ENCODE measurements at regions of chr15 and their contacts with region 1.

Region 1: DNA sequence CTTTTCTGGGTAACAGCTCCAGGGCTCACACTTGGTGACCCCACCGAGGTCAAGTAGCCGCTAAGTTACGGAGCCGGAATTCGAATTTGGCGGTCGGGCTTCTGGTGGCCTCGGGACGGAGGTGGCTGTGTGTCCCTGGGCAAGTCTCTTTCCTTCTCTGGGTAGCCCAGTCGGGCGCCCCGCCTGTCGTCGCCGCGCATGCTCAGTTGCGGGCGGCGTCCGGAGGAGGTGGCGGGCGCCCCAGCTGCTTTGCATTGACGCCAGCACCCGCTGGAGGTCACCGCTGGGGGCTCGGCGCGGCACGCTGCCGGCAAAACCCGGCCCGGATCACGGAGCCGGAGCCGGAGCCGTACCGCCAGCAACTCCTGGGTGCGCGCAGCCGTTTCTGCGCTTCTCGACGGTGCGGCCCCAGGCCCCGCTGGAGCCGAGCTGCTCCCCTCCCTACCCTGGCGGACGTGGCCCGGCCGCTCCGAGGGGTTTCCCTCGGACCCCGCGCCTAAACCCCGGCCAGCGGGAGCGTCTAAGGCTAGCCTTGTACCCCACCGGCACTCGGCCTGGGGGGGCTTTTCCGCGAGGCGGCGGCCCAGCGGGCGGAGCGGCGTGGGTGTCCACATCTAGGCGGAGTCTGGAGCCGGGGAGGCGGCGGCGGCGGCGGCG is 474 bp upstream of the PDE8A start:
- DNase-seq: peak; percentile 92 to 98 (median 95)
- ATAC-seq: peak; percentile 70
- H3K4me3 ChIP-seq: peak overlapping the region; percentile 78 to 94
- H3K4me3 Mint-ChIP-seq: peak overlapping the region; percentile 94
- H3K27ac ChIP-seq: peak overlapping the region; percentile 93 to 94
- H3K27ac Mint-ChIP-seq: peak overlapping the region; percentile 96
- H3K4me1 ChIP-seq: peaks cover 19% of the 10 kb centered on the region
- H3K4me1 Mint-ChIP-seq: peaks cover 39% of the 10 kb centered on the region
- H3K27me3 ChIP-seq: no peaks in the 10 kb centered on the region
- H3K27me3 Mint-ChIP-seq: no peaks in the 10 kb centered on the region
- CTCF ChIP-seq: no peak

Region 2: GRCh38 chr15:84658080-84658787 is 322.9 kb before region 1 on chr15 and contains the start of gene NMB:
- CTCF ChIA-PET with region 1: no interaction called
- POLR2A ChIA-PET with region 1: interaction called, 4 read pairs
- intact Hi-C with region 1: loop called (anchors 1 kb)
- DNase-seq: peak; percentile 68 to 93 (median 83)
- ATAC-seq: peak; percentile 66
- H3K4me3 ChIP-seq: peak within 1 kb of the TSS; percentile 58 to 60
- H3K4me3 Mint-ChIP-seq: peak within 1 kb of the TSS; percentile 80
- H3K27ac ChIP-seq: peak within 1 kb of the TSS; percentile 39 to 75
- H3K27ac Mint-ChIP-seq: peak within 1 kb of the TSS; percentile 72
- H3K4me1 ChIP-seq: peaks cover 24% of the 10 kb centered on the region
- H3K4me1 Mint-ChIP-seq: peaks cover 33% of the 10 kb centered on the region
- H3K27me3 ChIP-seq: no peaks in the 10 kb centered on the region
- H3K27me3 Mint-ChIP-seq: no peaks in the 10 kb centered on the region
- CTCF ChIP-seq: peak; percentile 70
- total RNA-seq, gene NMB: 1.8 to 2.0 TPM

Region 3: DNA sequence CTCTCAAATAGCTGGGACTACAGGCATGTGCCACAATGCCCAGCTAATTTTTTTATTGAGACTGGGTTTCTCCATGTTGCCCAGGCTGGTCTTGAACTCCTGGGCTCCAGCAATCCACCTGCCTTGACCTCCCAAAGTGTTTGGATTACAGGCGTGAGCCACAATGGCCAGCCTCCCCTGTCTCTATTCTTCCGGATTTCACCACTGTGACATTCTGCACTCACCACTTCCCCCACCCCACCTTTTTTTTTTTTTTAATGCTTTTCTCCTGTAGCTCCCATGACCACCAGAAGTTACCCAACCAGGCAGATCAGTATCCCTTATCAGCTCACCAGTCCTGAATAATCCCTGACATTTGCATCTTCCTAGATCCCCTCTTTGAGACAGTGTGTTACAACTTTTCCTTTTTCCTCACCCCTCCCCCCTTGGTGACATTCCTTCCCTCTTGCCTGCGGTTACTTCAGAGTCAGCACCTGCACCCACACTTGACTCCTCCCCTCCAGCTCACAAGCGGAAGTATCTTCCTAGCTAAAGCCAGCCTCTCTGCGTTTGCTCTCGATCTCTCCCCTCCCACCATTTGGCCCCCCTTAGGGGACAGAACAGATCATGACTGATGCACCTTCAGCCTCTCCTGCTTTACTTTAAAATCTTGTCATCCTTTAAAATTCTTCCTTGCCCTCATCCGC is 246.2 kb before region 1 on chr15:
- CTCF ChIA-PET with region 1: no interaction called
- POLR2A ChIA-PET with region 1: no interaction called
- intact Hi-C with region 1: no loop called
- DNase-seq: peak; percentile 21 to 89 (median 76)
- ATAC-seq: peak; percentile 85
- H3K4me3 ChIP-seq: peak overlapping the region; percentile 36 to 44
- H3K4me3 Mint-ChIP-seq: peak overlapping the region; percentile 77
- H3K27ac ChIP-seq: peak overlapping the region; percentile 7 to 62
- H3K27ac Mint-ChIP-seq: peak overlapping the region; percentile 92
- H3K4me1 ChIP-seq: peaks cover 47% of the 10 kb centered on the region
- H3K4me1 Mint-ChIP-seq: peaks cover 46% of the 10 kb centered on the region
- H3K27me3 ChIP-seq: no peaks in the 10 kb centered on the region
- H3K27me3 Mint-ChIP-seq: no peaks in the 10 kb centered on the region
- CTCF ChIP-seq: no peak

Region 4: DNA sequence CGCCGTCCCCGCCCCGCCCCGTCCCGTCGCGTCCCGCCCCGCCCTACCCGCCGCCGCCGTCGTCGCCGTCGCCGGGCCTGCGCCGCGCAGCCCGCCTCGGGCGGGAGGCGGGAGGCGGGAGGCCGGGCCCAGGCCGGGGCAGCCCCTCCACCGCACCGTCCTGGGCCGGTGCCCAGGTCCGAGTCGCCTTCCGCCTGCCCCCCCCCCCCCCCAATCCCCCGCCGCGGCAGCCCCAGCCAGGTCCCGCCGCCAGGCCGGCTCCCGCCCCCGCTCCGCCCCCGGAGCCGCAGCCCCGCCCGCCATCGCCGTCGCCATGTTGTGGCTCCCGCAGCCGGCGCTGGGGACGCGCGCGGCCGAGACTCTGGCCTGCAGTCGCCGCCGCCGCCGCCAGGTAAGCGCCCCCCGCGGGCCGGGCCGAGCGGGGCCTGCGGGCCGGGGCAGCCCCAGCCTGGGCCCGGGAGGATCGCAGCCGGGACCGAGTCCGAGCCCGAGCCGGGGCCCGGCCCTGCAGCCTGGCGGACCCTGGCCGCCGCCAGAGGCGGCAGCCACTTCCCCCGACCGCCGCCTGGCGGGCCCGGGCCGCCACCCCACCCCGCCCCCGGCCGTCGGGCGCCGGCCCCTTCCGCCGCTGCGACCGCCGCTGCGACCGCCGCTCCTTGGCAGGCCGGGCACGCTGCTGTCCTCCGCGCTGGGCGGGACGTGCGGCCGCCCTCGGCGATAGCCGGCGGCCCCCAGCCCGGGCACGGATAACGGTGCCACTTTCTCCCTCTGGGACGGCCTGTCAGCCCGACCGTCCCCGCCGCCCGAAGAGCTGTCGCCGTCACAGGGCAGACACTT is 232.7 kb before region 1 on chr15 and contains the start of gene ZNF592:
- CTCF ChIA-PET with region 1: no interaction called
- POLR2A ChIA-PET with region 1: no interaction called
- intact Hi-C with region 1: loop called in 1 of 2 experiments (anchors 2 kb)
- DNase-seq: peak; percentile 63 to 90 (median 80)
- ATAC-seq: peak; percentile 67
- H3K4me3 ChIP-seq: peak within 1 kb of the TSS; percentile 74 to 90
- H3K4me3 Mint-ChIP-seq: peak within 1 kb of the TSS; percentile 99
- H3K27ac ChIP-seq: peak within 1 kb of the TSS; percentile 82 to 94
- H3K27ac Mint-ChIP-seq: peak within 1 kb of the TSS; percentile 100
- H3K4me1 ChIP-seq: peaks cover 46% of the 10 kb centered on the region
- H3K4me1 Mint-ChIP-seq: peaks cover 72% of the 10 kb centered on the region
- H3K27me3 ChIP-seq: no peaks in the 10 kb centered on the region
- H3K27me3 Mint-ChIP-seq: no peaks in the 10 kb centered on the region
- CTCF ChIP-seq: no peak
- total RNA-seq, gene ZNF592: 24.6 to 25.1 TPM

Region 5: GRCh38 chr15:84992157-84992944 is 11.2 kb after region 1 on chr15:
- CTCF ChIA-PET with region 1: interaction called, 6 read pairs
- POLR2A ChIA-PET with region 1: interaction called, 10 read pairs
- intact Hi-C with region 1: no loop called
- DNase-seq: peak in 4 of 9 experiments; percentile 19 to 38 (median 26)
- ATAC-seq: peak; percentile 42
- H3K4me3 ChIP-seq: no peak overlapping the region
- H3K4me3 Mint-ChIP-seq: no peak overlapping the region
- H3K27ac ChIP-seq: no peak overlapping the region
- H3K27ac Mint-ChIP-seq: no peak overlapping the region
- H3K4me1 ChIP-seq: peaks cover 18% of the 10 kb centered on the region
- H3K4me1 Mint-ChIP-seq: peaks cover 39% of the 10 kb centered on the region
- H3K27me3 ChIP-seq: no peaks in the 10 kb centered on the region
- H3K27me3 Mint-ChIP-seq: no peaks in the 10 kb centered on the region
- CTCF ChIP-seq: no peak

Region 6: GRCh38 chr15:85044251-85044853 is 63.2 kb after region 1 on chr15:
- CTCF ChIA-PET with region 1: interaction called, 5 read pairs
- POLR2A ChIA-PET with region 1: interaction called, 5 read pairs
- intact Hi-C with region 1: loop called (anchors 2 kb)
- DNase-seq: peak in 8 of 9 experiments; percentile 17 to 70 (median 54)
- ATAC-seq: peak; percentile 58
- H3K4me3 ChIP-seq: no peak overlapping the region
- H3K4me3 Mint-ChIP-seq: no peak overlapping the region
- H3K27ac ChIP-seq: no peak overlapping the region
- H3K27ac Mint-ChIP-seq: no peak overlapping the region
- H3K4me1 ChIP-seq: peaks cover 18% of the 10 kb centered on the region
- H3K4me1 Mint-ChIP-seq: peaks cover 26% of the 10 kb centered on the region
- H3K27me3 ChIP-seq: no peaks in the 10 kb centered on the region
- H3K27me3 Mint-ChIP-seq: no peaks in the 10 kb centered on the region
- CTCF ChIP-seq: peak; percentile 60

Region 7: GRCh38 chr15:85794603-85795336 is 813.6 kb after region 1 on chr15 and contains the start of gene KLHL25:
- CTCF ChIA-PET with region 1: no interaction called
- POLR2A ChIA-PET with region 1: no interaction called
- intact Hi-C with region 1: loop called in 1 of 2 experiments (anchors 5 kb)
- DNase-seq: peak; percentile 84 to 97 (median 90)
- ATAC-seq: peak; percentile 98
- H3K4me3 ChIP-seq: peak within 1 kb of the TSS; percentile 62 to 86
- H3K4me3 Mint-ChIP-seq: peak within 1 kb of the TSS; percentile 93
- H3K27ac ChIP-seq: peak within 1 kb of the TSS; percentile 40 to 56
- H3K27ac Mint-ChIP-seq: peak within 1 kb of the TSS; percentile 89
- H3K4me1 ChIP-seq: peaks cover 28% of the 10 kb centered on the region
- H3K4me1 Mint-ChIP-seq: peaks cover 39% of the 10 kb centered on the region
- H3K27me3 ChIP-seq: no peaks in the 10 kb centered on the region
- H3K27me3 Mint-ChIP-seq: peaks cover 3% of the 10 kb centered on the region
- CTCF ChIP-seq: no peak
- total RNA-seq, gene KLHL25: 4.3 to 4.9 TPM

Measured in CD8-positive, alpha-beta T cell (primary cell).